Natural killer cell (primary cell): ENCODE measurements at regions of chr9 and their contacts with region 1.

Region 1: GRCh38 chr9:108551030-108551838 is 304.6 kb downstream of the ACTL7B start:
- DNase-seq: no peak
- ATAC-seq: no peak
- H3K4me3 ChIP-seq: no peak overlapping the region
- H3K4me3 Mint-ChIP-seq: no peak overlapping the region
- H3K27ac ChIP-seq: no peak overlapping the region
- H3K27ac Mint-ChIP-seq: no peak overlapping the region
- H3K4me1 ChIP-seq: no peaks in the 10 kb centered on the region
- H3K4me1 Mint-ChIP-seq: no peaks in the 10 kb centered on the region
- H3K27me3 ChIP-seq: no peaks in the 10 kb centered on the region
- H3K27me3 Mint-ChIP-seq: no peaks in the 10 kb centered on the region
- CTCF ChIP-seq: no peak

Region 2: GRCh38 chr9:108486831-108487230 is 64.4 kb before region 1 on chr9:
- intact Hi-C with region 1: no loop called
- DNase-seq: no peak
- ATAC-seq: no peak
- H3K4me3 ChIP-seq: no peak overlapping the region
- H3K4me3 Mint-ChIP-seq: no peak overlapping the region
- H3K27ac ChIP-seq: no peak overlapping the region
- H3K27ac Mint-ChIP-seq: no peak overlapping the region
- H3K4me1 ChIP-seq: no peaks in the 10 kb centered on the region
- H3K4me1 Mint-ChIP-seq: no peaks in the 10 kb centered on the region
- H3K27me3 ChIP-seq: no peaks in the 10 kb centered on the region
- H3K27me3 Mint-ChIP-seq: no peaks in the 10 kb centered on the region
- CTCF ChIP-seq: no peak

Region 3: GRCh38 chr9:108618900-108619550 is 67.8 kb after region 1 on chr9:
- intact Hi-C with region 1: loop called (anchors 10 kb)
- DNase-seq: no peak
- ATAC-seq: no peak
- H3K4me3 ChIP-seq: no peak overlapping the region
- H3K4me3 Mint-ChIP-seq: no peak overlapping the region
- H3K27ac ChIP-seq: no peak overlapping the region
- H3K27ac Mint-ChIP-seq: no peak overlapping the region
- H3K4me1 ChIP-seq: no peaks in the 10 kb centered on the region
- H3K4me1 Mint-ChIP-seq: no peaks in the 10 kb centered on the region
- H3K27me3 ChIP-seq: no peaks in the 10 kb centered on the region
- H3K27me3 Mint-ChIP-seq: no peaks in the 10 kb centered on the region
- CTCF ChIP-seq: no peak